Stomach (tissue), 19 donors: ENCODE measurements at regions of chr11 and their contacts with region 1.

Region 1: GRCh38 chr11:128522055-128522942 is 65.1 kb downstream of the ETS1 start:
- DNase-seq: peak; percentile 96 to 98
- H3K4me3 ChIP-seq: peak overlapping the region; percentile 56 to 84 (median 68)
- H3K27ac ChIP-seq: peak overlapping the region; percentile 92 to 96 (median 94)
- H3K4me1 ChIP-seq: peaks cover 33 to 62% (median 46%) of the 10 kb centered on the region in 4 donors
- H3K27me3 ChIP-seq: no peaks in the 10 kb centered on the region
- CTCF ChIP-seq: peak in 1 of 7 experiments; percentile 5
- EP300 ChIP-seq: peak; percentile 23
- POLR2A ChIP-seq: peak in 2 of 4 donors; percentile 64 to 67

Region 2: GRCh38 chr11:128472128-128473089 is 49.9 kb before region 1 on chr11:
- intact Hi-C with region 1: no loop called
- DNase-seq: peak in 1 of 2 donors; percentile 36
- H3K4me3 ChIP-seq: no peak overlapping the region
- H3K27ac ChIP-seq: peak overlapping the region in 4 of 5 donors; percentile 1 to 68 (median 46)
- H3K4me1 ChIP-seq: peaks cover 47 to 97% (median 76%) of the 10 kb centered on the region in 4 donors
- H3K27me3 ChIP-seq: no peaks in the 10 kb centered on the region
- CTCF ChIP-seq: no peak
- EP300 ChIP-seq: no peak
- POLR2A ChIP-seq: no peak

Region 3: GRCh38 chr11:128624269-128625175 is 102.2 kb after region 1 on chr11:
- intact Hi-C with region 1: loop called (anchors 10 kb)
- DNase-seq: peak; percentile 56 to 77
- H3K4me3 ChIP-seq: no peak overlapping the region
- H3K27ac ChIP-seq: peak overlapping the region; percentile 10 to 66 (median 51)
- H3K4me1 ChIP-seq: peaks cover 5 to 43% (median 20%) of the 10 kb centered on the region in 4 donors
- H3K27me3 ChIP-seq: no peaks in the 10 kb centered on the region
- CTCF ChIP-seq: no peak
- EP300 ChIP-seq: no peak
- POLR2A ChIP-seq: no peak

Region 4: DNA sequence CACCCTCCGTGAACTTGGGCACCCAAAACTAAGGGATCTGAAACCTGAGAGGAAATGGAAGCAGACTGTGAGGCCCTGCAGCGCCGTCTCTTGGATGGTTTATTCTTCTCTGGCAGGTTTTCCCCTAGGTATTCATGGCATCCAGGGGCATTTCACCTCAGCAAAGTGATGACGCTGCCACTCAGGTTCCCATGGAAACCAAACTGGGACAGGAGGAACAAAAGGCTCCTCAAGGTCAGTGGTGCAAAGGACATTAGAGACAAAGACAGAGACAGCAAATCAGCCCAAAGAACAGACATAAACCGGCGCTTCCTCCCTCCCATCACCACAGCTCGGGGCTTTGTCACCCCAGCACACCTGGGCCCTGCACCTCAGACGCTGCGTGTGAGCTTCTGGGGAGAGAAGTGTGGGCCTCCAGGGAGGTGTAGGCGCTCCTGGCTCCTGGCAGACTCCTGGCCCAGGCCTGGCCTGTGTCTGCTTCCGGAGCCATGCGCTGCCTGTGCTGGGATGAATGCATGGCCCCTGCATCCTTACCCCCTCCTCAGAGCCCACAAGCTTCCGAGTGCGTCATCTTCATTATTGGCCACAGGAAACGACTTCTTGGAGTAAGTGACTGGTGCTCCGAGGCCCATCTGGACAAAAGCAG is 414.4 kb after region 1 on chr11:
- intact Hi-C with region 1: no loop called
- DNase-seq: peak in 1 of 2 donors; percentile 45
- H3K4me3 ChIP-seq: no peak overlapping the region
- H3K27ac ChIP-seq: no peak overlapping the region
- H3K4me1 ChIP-seq: no peaks in the 10 kb centered on the region
- H3K27me3 ChIP-seq: peaks cover 0 to 15% (median 0%) of the 10 kb centered on the region in 3 donors
- CTCF ChIP-seq: no peak
- EP300 ChIP-seq: no peak
- POLR2A ChIP-seq: no peak